GM12878 (cell line): ENCODE measurements at regions of chr5 and their contacts with region 1.

Region 1: DNA sequence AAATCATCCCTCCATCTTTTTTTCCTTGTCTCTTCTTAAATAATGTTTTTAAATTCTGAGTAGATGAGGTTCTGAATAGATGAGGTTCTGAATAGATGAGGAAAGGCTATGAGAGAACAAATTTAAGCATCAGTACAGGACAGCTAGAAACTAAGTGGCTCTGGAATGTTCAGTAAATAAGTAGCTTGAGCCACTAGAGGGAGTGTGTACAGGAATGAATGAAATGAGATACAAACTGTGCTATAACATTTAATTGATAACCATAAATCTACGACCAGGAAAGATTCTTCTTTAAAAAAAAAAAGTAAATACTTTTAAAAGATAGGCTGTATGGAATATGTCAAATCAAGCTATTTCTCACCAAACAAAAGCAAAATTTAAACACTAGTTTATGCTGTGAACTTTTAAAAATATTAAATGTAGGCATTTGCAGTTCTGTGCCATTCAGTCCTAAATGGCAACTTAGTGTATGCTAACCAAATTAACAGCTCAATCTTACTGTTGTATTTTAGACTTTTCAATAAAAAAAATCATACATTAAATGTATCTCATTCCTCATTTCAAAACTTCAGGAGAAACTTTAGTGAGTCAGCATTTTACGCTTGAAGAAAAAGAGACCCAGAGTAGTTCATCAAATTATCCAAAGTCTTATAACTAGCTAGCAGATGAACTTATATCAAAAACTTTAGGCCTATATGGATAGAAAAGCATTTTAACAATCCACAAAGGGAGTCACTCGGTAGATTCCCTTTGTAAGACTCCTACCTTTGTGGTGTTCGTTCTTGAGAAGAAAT is 70.4 kb upstream of the SNX2 start:
- DNase-seq: no peak
- ATAC-seq: peak; percentile 34
- H3K4me3 ChIP-seq: no peak overlapping the region
- H3K27ac ChIP-seq: no peak overlapping the region
- H3K4me1 ChIP-seq: peaks cover 21% of the 10 kb centered on the region
- H3K27me3 ChIP-seq: no peaks in the 10 kb centered on the region
- CTCF ChIP-seq: peak; percentile 51 to 58 (median 52); a peak in 5 of 6 replicates
- EP300 ChIP-seq: no peak
- POLR2A ChIP-seq: no peak
- RAD21 ChIP-seq: peak; percentile 60

Region 2: DNA sequence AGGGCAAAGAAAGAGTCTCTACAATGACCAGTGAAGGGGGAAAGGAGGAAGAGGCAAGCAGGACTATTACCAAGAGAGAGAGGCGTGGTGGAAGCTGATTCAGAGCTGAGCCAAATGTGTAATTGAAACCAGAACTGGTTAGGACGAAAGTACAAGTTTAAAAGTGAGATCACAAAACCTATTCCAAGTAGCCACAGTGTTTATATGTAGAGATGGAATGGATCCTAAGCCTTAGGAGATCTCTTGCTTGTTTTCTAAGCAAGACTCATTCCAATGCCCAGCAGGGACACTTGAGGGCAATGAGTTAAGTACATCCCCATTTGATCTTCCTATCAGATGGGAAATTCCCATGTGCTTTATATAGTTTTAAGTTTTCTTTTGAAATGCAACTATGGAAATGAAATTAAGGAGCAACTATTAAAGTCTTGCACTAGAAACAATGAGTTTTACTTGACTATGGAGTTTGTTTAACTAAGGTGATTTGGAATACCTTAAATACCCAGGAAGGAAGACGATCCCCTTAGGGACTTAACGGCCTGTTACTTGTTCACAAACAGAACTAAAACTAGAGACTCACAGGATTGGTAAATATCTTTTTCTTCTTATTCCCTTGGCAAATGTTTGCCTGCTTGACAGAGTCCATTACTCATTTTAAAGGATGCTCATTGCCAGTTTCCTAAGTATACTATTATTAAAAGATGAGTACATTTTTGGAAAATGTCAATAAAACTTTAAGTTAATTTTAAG is 19.3 kb after region 1 on chr5:
- CTCF ChIA-PET with region 1: interaction called, 33 read pairs
- POLR2A ChIA-PET with region 1: interaction called, 3 read pairs
- RAD21 ChIA-PET with region 1: interaction called, 4 read pairs
- SMC1A ChIA-PET with region 1: interaction called, 20 read pairs
- in situ Hi-C with region 1: no loop called
- intact Hi-C with region 1: loop called (anchors 1 kb)
- DNase-seq: peak; percentile 59
- ATAC-seq: peak; percentile 94
- H3K4me3 ChIP-seq: 0 out of 2 replicates have a peak overlapping the region, but pooled peaks have one; percentile 6
- H3K27ac ChIP-seq: peak overlapping the region; percentile 20; the same call in 1 of the 2 replicates
- H3K4me1 ChIP-seq: peaks cover 12% of the 10 kb centered on the region
- H3K27me3 ChIP-seq: no peaks in the 10 kb centered on the region
- CTCF ChIP-seq: no peak
- EP300 ChIP-seq: peak; percentile 42 to 62; a peak in 2 of 4 replicates
- POLR2A ChIP-seq: no peak
- RAD21 ChIP-seq: 0 out of 2 replicates have a peak, but pooled peaks have one; percentile 11

Region 3: GRCh38 chr5:122756263-122756911 is 51.9 kb after region 1 on chr5:
- CTCF ChIA-PET with region 1: interaction called, 11 read pairs
- POLR2A ChIA-PET with region 1: no interaction called
- RAD21 ChIA-PET with region 1: interaction called, 7 read pairs
- SMC1A ChIA-PET with region 1: interaction called, 5 read pairs
- in situ Hi-C with region 1: no loop called
- intact Hi-C with region 1: loop called (anchors 5 kb)
- DNase-seq: no peak
- ATAC-seq: peak; percentile 86
- H3K4me3 ChIP-seq: no peak overlapping the region
- H3K27ac ChIP-seq: peak overlapping the region; percentile 66; the same call in 1 of the 2 replicates
- H3K4me1 ChIP-seq: peaks cover 17% of the 10 kb centered on the region
- H3K27me3 ChIP-seq: no peaks in the 10 kb centered on the region
- CTCF ChIP-seq: no peak
- EP300 ChIP-seq: no peak
- POLR2A ChIP-seq: no peak
- RAD21 ChIP-seq: peak; percentile 11; the same call in 1 of the 2 replicates

Region 4: GRCh38 chr5:122774861-122775549 is 70.6 kb after region 1 on chr5 and contains the start of gene SNX2:
- CTCF ChIA-PET with region 1: interaction called, 17 read pairs
- POLR2A ChIA-PET with region 1: interaction called, 3 read pairs
- RAD21 ChIA-PET with region 1: interaction called, 10 read pairs
- SMC1A ChIA-PET with region 1: interaction called, 13 read pairs
- in situ Hi-C with region 1: no loop called
- intact Hi-C with region 1: loop called (anchors 5 kb)
- DNase-seq: no peak
- ATAC-seq: peak; percentile 94
- H3K4me3 ChIP-seq: peak within 1 kb of the TSS; percentile 96
- H3K27ac ChIP-seq: peak within 1 kb of the TSS; percentile 67
- H3K4me1 ChIP-seq: peaks cover 3% of the 10 kb centered on the region
- H3K27me3 ChIP-seq: no peaks in the 10 kb centered on the region
- CTCF ChIP-seq: peak in 1 of 3 experiments; percentile 28; a peak in 2 of 6 replicates
- EP300 ChIP-seq: no peak
- POLR2A ChIP-seq: peak; percentile 95
- RAD21 ChIP-seq: no peak
- polyA plus RNA-seq, gene SNX2: 59.3 to 63.5 TPM

Region 5: GRCh38 chr5:122780296-122780695 is 75.9 kb after region 1 on chr5:
- CTCF ChIA-PET with region 1: interaction called, 17 read pairs
- POLR2A ChIA-PET with region 1: interaction called, 3 read pairs
- RAD21 ChIA-PET with region 1: interaction called, 10 read pairs
- SMC1A ChIA-PET with region 1: interaction called, 13 read pairs
- in situ Hi-C with region 1: no loop called
- intact Hi-C with region 1: loop called (anchors 5 kb)
- DNase-seq: no peak
- ATAC-seq: peak; percentile 50
- H3K4me3 ChIP-seq: peak overlapping the region; percentile 13; the same call in 1 of the 2 replicates
- H3K27ac ChIP-seq: peak overlapping the region; percentile 28; the same call in 1 of the 2 replicates
- H3K4me1 ChIP-seq: peaks cover 6% of the 10 kb centered on the region
- H3K27me3 ChIP-seq: no peaks in the 10 kb centered on the region
- CTCF ChIP-seq: no peak
- EP300 ChIP-seq: no peak
- POLR2A ChIP-seq: no peak
- RAD21 ChIP-seq: no peak

Region 6: GRCh38 chr5:122999945-123000563 is 295.6 kb after region 1 on chr5:
- CTCF ChIA-PET with region 1: interaction called, 3 read pairs
- POLR2A ChIA-PET with region 1: no interaction called
- RAD21 ChIA-PET with region 1: no interaction called
- SMC1A ChIA-PET with region 1: no interaction called
- in situ Hi-C with region 1: no loop called
- intact Hi-C with region 1: loop called (anchors 5 kb)
- DNase-seq: peak; percentile 40
- ATAC-seq: peak; percentile 99
- H3K4me3 ChIP-seq: no peak overlapping the region
- H3K27ac ChIP-seq: no peak overlapping the region
- H3K4me1 ChIP-seq: no peaks in the 10 kb centered on the region
- H3K27me3 ChIP-seq: no peaks in the 10 kb centered on the region
- CTCF ChIP-seq: peak; percentile 79 to 89 (median 82)
- EP300 ChIP-seq: no peak
- POLR2A ChIP-seq: no peak
- RAD21 ChIP-seq: peak; percentile 95

Region 7: DNA sequence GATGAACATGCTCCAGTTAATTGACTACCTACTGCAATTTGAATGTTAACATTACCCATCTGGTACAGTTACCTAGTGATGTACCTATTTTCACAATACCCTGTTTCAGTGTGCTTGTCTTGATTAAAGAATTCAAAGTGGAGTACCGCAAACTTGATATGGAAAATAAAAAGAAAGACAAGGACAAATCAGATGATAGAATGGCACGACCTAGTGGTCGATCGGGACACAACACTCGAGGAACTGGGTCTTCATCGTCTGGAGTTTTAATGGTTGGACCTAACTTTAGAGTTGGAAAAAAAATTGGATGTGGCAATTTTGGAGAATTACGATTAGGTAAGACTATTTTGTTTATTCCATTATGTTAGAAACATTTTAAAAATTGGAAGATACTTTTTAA is 841.1 kb after region 1 on chr5:
- CTCF ChIA-PET with region 1: no interaction called
- POLR2A ChIA-PET with region 1: no interaction called
- RAD21 ChIA-PET with region 1: no interaction called
- SMC1A ChIA-PET with region 1: no interaction called
- in situ Hi-C with region 1: no loop called
- intact Hi-C with region 1: no loop called
- DNase-seq: no peak
- ATAC-seq: no peak
- H3K4me3 ChIP-seq: no peak overlapping the region
- H3K27ac ChIP-seq: no peak overlapping the region
- H3K4me1 ChIP-seq: peaks cover 14% of the 10 kb centered on the region
- H3K27me3 ChIP-seq: no peaks in the 10 kb centered on the region
- CTCF ChIP-seq: peak; percentile 26 to 39 (median 38); a peak in 5 of 6 replicates
- EP300 ChIP-seq: no peak
- POLR2A ChIP-seq: no peak
- RAD21 ChIP-seq: 0 out of 2 replicates have a peak, but pooled peaks have one; percentile 12